ENCODE measurements at regions of chr17 and their contacts with region 1.

Region 1: DNA sequence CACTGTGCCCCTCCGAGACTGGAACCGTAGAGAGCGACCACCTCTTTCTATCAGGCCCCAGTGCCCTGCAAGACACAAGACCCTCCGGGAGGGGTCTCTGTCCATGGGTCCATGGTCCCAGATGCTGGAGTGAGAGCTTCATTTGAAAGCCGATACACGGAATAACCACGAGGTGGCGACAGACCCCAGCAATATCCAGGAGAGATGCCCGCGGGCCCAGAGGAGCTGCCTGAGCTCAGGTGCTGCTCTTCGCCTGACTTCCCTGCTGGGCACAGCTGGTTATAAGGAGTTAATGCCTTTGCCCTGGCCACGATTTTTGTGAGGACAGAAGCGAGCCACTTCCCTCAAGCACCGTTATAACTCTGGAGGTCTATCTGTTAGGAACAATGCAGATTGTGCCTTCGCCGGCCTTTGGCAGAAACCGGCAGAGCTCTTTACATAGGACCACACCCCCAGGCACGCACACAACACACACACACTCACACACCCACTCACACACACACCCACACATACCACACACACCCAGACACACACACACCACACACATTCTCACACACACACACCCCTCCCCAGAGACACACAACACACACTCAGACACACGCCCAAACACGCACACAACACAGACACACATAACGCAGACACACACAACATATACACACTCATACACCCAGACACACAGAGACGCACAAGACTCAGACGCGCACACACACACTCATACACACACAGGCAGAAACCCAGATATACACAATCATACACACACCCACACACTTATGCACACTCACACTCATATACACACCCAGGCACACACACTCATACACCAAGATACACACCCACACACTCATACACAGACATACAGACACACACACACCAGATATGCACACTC is 436.4 kb downstream of the SOX9 start:
- DNase-seq: peak; percentile 87

Region 2: DNA sequence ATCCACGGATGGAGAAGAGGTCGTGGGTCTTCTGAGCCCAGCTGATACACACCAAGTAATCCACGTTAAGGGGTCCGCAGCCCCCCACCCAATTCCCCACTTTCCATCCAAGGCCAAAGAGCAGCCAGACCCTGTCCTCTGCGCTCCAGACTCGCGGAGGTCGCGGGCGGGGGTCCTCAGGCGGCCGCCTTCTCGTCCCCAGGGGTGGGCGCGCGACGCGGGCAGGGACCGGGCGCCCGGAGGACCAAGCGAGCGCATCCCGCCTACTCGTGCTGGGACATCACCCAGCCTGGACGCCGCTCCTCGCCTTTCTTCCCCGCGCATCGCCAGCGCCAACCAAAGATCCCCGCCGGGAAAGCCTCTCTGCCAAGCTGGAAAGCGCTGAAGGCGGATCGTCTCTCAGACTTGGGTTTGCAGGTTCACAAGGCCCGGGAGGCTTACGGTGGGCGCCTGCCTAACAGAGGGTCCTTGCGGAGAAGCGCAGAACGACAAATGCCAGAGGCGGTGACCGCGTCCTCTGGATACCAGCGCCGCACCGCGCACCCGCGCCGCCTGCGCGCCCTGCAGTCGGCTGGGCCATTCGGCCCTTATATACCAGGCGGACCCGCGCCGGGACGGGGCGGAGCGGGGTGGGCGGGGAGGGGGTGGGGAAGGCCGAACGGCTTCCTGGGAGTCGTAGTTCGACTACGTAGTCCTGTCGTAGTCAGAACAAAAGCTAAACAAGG is 35.2 kb after region 1 on chr17:
- CTCF ChIA-PET with region 1: interaction called, 11 read pairs
- POLR2A ChIA-PET with region 1: interaction called, 4 read pairs
- DNase-seq: peak; percentile 96

Region 3: GRCh38 chr17:72725433-72726068 is 168.4 kb after region 1 on chr17:
- CTCF ChIA-PET with region 1: interaction called, 36 read pairs
- POLR2A ChIA-PET with region 1: no interaction called
- DNase-seq: peak; percentile 72

Region 4: GRCh38 chr17:72774236-72774635 is 217.1 kb after region 1 on chr17:
- CTCF ChIA-PET with region 1: interaction called, 11 read pairs
- POLR2A ChIA-PET with region 1: no interaction called
- DNase-seq: no peak

Measured in HEK293T (cell line).